ENCODE measurements at regions of chr2 and their contacts with region 1.

Region 1: DNA sequence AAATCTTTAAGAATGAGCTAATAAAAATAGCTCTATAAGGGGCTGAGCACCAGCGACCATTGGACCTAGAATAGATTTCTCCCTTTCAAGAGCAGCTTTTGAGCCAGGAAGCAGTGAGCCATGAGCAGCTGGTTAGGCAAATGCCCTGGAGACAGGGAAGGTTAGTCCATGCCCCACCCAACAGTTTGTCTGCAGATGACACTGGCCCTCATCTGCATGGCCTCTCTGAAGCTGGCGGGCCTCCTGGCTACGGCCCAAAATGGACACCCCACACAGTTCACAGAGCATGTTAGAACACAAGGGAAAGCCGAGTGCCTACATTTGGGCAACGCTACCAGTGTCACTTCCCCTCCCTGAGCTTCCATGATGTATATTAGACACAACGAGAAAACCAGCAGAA is 201.1 kb downstream of the MGAT5 start:
- DNase-seq: no peak
- H3K4me3 ChIP-seq: no peak overlapping the region
- H3K27ac ChIP-seq: no peak overlapping the region
- H3K4me1 ChIP-seq: no peaks in the 10 kb centered on the region; a peak in 1 of 4 replicates
- H3K27me3 ChIP-seq: no peaks in the 10 kb centered on the region
- CTCF ChIP-seq: no peak
- EP300 ChIP-seq: no peak
- RAD21 ChIP-seq: no peak

Region 2: DNA sequence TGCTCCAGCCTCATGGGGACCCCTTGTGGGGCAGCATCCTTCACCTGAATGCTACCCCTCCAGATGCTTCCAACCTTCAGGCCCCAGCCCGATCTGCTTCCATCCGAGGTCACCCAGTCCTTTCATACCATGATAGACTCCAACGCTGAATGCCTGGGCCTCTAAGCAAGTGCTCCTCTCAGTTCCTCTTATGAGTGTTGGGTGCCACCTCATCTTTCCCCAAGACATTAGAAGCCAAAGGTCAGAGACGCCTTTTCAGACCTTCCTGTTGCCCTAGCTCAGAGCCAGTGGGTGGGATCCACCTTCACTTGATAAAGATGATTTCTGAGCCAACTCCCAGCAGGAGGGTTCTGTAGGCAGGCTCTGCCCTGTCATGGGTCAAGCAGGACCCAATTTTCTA is 375.6 kb before region 1 on chr2:
- CTCF ChIA-PET with region 1: interaction called, 16 read pairs
- POLR2A ChIA-PET with region 1: no interaction called
- DNase-seq: no peak
- H3K4me3 ChIP-seq: no peak overlapping the region
- H3K27ac ChIP-seq: no peak overlapping the region; a peak in 1 of 4 replicates
- H3K4me1 ChIP-seq: peaks cover 0 to 32% of the 10 kb centered on the region in 2 experiments; a peak in 2 of 4 replicates
- H3K27me3 ChIP-seq: no peaks in the 10 kb centered on the region; the same call in 1 of the 2 replicates
- CTCF ChIP-seq: no peak
- EP300 ChIP-seq: no peak
- RAD21 ChIP-seq: no peak

Region 3: GRCh38 chr2:134207564-134208209 is 247.2 kb before region 1 on chr2:
- CTCF ChIA-PET with region 1: interaction called, 11 read pairs
- POLR2A ChIA-PET with region 1: no interaction called
- DNase-seq: peak; percentile 44
- H3K4me3 ChIP-seq: no peak overlapping the region; a peak in 1 of 4 replicates
- H3K27ac ChIP-seq: no peak overlapping the region
- H3K4me1 ChIP-seq: peaks cover 6 to 17% of the 10 kb centered on the region in 2 experiments; a peak in 3 of 4 replicates
- H3K27me3 ChIP-seq: no peaks in the 10 kb centered on the region
- CTCF ChIP-seq: peak; percentile 76
- EP300 ChIP-seq: no peak
- RAD21 ChIP-seq: peak; percentile 70

Region 4: DNA sequence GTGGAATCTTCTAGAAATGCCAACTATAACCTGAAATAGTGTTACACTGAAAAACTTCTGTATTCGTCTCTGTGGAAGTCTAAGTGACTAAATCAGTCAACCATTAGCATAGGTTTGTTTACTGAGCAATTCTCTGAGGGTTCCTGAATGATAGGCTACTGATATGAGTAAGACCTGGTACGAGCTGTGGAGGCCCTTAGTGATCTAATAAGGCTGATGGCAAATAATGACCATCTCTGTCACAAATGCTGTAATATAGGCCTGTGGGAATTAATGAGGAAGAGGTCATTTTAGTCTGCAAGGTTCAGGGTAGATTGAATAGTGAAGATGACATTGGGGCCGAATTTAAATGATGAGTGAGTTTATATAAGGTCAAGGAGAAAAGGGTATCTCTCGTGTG is 118.6 kb before region 1 on chr2:
- CTCF ChIA-PET with region 1: interaction called, 19 read pairs
- POLR2A ChIA-PET with region 1: no interaction called
- DNase-seq: no peak
- H3K4me3 ChIP-seq: no peak overlapping the region
- H3K27ac ChIP-seq: peak overlapping the region in 1 of 2 experiments; percentile 100; a peak in 2 of 4 replicates
- H3K4me1 ChIP-seq: peaks cover 0 to 37% of the 10 kb centered on the region in 2 experiments; a peak in 2 of 4 replicates
- H3K27me3 ChIP-seq: no peaks in the 10 kb centered on the region
- CTCF ChIP-seq: no peak
- EP300 ChIP-seq: no peak
- RAD21 ChIP-seq: no peak

Region 5: GRCh38 chr2:134402410-134402809 is 52.5 kb before region 1 on chr2:
- CTCF ChIA-PET with region 1: interaction called, 18 read pairs
- POLR2A ChIA-PET with region 1: no interaction called
- DNase-seq: no peak
- H3K4me3 ChIP-seq: no peak overlapping the region
- H3K27ac ChIP-seq: peak overlapping the region in 1 of 2 experiments; percentile 85; a peak in 1 of 4 replicates
- H3K4me1 ChIP-seq: peaks cover 17 to 33% of the 10 kb centered on the region in 2 experiments
- H3K27me3 ChIP-seq: no peaks in the 10 kb centered on the region
- CTCF ChIP-seq: no peak
- EP300 ChIP-seq: no peak
- RAD21 ChIP-seq: no peak

Region 6: DNA sequence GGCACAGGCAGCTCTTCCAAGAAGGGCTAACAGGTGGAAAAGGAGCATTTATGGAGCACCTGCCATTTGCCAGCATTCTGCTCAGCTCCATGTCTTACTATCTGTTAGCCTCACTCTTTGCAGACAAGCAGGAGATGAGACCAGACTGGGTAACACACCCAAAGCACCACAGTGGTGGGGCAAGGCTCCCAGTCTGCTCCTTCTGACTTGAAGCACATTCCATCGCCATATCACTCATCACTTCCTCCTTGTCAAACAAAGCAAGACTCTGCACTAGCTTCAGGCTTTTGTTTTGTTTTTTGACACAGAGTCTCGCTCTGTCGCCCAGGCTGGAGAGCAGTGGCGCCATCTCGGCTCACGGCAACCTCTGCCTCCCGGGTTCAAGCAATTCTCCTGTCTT is 18.2 kb before region 1 on chr2:
- CTCF ChIA-PET with region 1: interaction called, 33 read pairs
- POLR2A ChIA-PET with region 1: no interaction called
- DNase-seq: no peak
- H3K4me3 ChIP-seq: no peak overlapping the region
- H3K27ac ChIP-seq: no peak overlapping the region
- H3K4me1 ChIP-seq: peaks cover 0 to 10% of the 10 kb centered on the region in 2 experiments; a peak in 2 of 4 replicates
- H3K27me3 ChIP-seq: no peaks in the 10 kb centered on the region
- CTCF ChIP-seq: no peak
- EP300 ChIP-seq: no peak
- RAD21 ChIP-seq: no peak

Measured in SK-N-SH (cell line).